Naive thymus-derived CD4-positive, alpha-beta T cell (primary cell): ENCODE measurements at regions of chr15 and their contacts with region 1.

Region 1: DNA sequence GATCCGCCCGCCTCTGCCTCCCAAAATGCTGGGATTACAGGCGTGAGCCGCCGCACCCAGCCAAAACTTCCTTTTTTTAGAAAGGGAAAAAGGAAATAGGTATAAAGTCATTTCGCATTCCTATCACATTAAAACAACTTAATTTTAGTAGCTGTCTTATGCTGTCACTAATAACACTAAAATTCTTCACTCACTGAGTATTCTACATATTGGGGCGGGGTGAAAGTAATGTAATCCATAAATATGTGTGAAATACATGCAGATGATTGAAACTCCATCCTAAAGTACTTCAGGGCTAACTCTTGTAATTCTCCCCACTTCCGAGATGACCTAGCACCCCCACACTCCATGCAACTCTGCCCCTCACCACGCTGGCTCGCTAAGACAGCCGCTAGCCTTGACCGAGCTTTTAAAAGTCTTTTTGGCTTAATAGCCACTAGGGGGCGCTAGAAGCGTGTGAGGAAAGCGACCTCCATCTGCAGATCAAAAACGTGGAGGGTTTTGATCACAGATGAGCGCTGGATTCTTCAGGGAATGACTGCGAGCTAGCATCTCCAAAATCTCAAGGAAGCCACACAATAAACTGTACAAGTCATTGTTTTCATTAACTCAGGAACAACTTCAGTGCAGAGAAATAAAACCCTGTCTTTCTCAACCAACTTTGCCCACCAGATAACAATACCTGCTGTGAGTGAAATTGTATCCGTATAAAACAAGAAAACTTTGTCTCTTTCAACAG is 129.3 kb upstream of the IGF1R start:
- DNase-seq: peak; percentile 16 to 70 (median 52)
- ATAC-seq: peak; percentile 85
- H3K4me3 ChIP-seq: no peak overlapping the region
- H3K4me3 Mint-ChIP-seq: no peak overlapping the region
- H3K27ac ChIP-seq: no peak overlapping the region
- H3K27ac Mint-ChIP-seq: peak overlapping the region in 1 of 9 donors; percentile 13
- H3K4me1 ChIP-seq: no peaks in the 10 kb centered on the region
- H3K4me1 Mint-ChIP-seq: peaks cover 0 to 8% (median 6%) of the 10 kb centered on the region in 7 donors
- H3K27me3 ChIP-seq: no peaks in the 10 kb centered on the region
- H3K27me3 Mint-ChIP-seq: peaks cover 0 to 7% (median 5%) of the 10 kb centered on the region in 5 donors

Region 2: GRCh38 chr15:98548154-98548971 is 29.4 kb after region 1 on chr15:
- CTCF ChIA-PET with region 1: no interaction called
- POLR2A ChIA-PET with region 1: no interaction called
- intact Hi-C with region 1: loop called in 1 of 2 experiments (anchors 1 kb)
- DNase-seq: peak in 8 of 9 donors; percentile 9 to 55 (median 20)
- ATAC-seq: peak; percentile 74
- H3K4me3 ChIP-seq: peak overlapping the region; percentile 59
- H3K4me3 Mint-ChIP-seq: peak overlapping the region; percentile 86 to 94 (median 90)
- H3K27ac ChIP-seq: no peak overlapping the region
- H3K27ac Mint-ChIP-seq: peak overlapping the region in 5 of 9 donors; percentile 23 to 87 (median 72)
- H3K4me1 ChIP-seq: no peaks in the 10 kb centered on the region
- H3K4me1 Mint-ChIP-seq: peaks cover 15 to 26% (median 22%) of the 10 kb centered on the region in 7 donors
- H3K27me3 ChIP-seq: no peaks in the 10 kb centered on the region
- H3K27me3 Mint-ChIP-seq: peaks cover 23 to 50% (median 39%) of the 10 kb centered on the region in 5 donors

Region 3: GRCh38 chr15:98779463-98780071 is 260.6 kb after region 1 on chr15:
- CTCF ChIA-PET with region 1: interaction called, 4 read pairs
- POLR2A ChIA-PET with region 1: no interaction called
- intact Hi-C with region 1: loop called (anchors 1 kb)
- DNase-seq: peak; percentile 44 to 75 (median 64)
- ATAC-seq: peak; percentile 94
- H3K4me3 ChIP-seq: no peak overlapping the region
- H3K4me3 Mint-ChIP-seq: peak overlapping the region; percentile 43 to 75 (median 64)
- H3K27ac ChIP-seq: no peak overlapping the region
- H3K27ac Mint-ChIP-seq: peak overlapping the region in 4 of 9 donors; percentile 56 to 78 (median 70)
- H3K4me1 ChIP-seq: peaks cover 0 to 21% of the 10 kb centered on the region in 2 donors
- H3K4me1 Mint-ChIP-seq: peaks cover 26 to 80% (median 62%) of the 10 kb centered on the region in 7 donors
- H3K27me3 ChIP-seq: no peaks in the 10 kb centered on the region
- H3K27me3 Mint-ChIP-seq: peaks cover 0 to 3% (median 0%) of the 10 kb centered on the region in 5 donors

Region 4: DNA sequence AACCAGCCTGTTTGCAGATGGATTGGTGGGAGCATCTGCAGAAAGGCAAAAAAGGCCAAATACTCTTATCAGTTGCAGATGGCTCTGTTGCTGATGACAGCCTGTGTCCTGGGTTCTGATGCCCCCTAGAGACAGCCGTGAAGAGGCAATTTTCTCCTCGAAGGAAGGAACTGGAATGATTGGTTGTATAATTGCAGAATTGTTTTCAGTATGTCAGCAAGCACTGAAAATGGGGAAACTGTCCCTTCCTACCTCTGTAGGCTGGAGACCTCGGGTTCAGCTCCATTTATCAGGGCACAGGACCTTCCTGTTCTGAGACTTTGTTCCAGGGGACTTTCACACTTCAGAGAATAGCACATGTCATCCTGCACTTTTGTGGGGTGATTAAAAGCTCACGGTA is 385.6 kb after region 1 on chr15:
- CTCF ChIA-PET with region 1: no interaction called
- POLR2A ChIA-PET with region 1: no interaction called
- intact Hi-C with region 1: loop called in 1 of 2 experiments (anchors 1 kb)
- DNase-seq: peak in 3 of 9 donors; percentile 7 to 12 (median 10)
- ATAC-seq: peak; percentile 49
- H3K4me3 ChIP-seq: no peak overlapping the region
- H3K4me3 Mint-ChIP-seq: no peak overlapping the region
- H3K27ac ChIP-seq: no peak overlapping the region
- H3K27ac Mint-ChIP-seq: no peak overlapping the region
- H3K4me1 ChIP-seq: no peaks in the 10 kb centered on the region
- H3K4me1 Mint-ChIP-seq: peaks cover 4 to 20% (median 10%) of the 10 kb centered on the region in 7 donors
- H3K27me3 ChIP-seq: peaks cover 0 to 3% of the 10 kb centered on the region in 2 donors
- H3K27me3 Mint-ChIP-seq: no peaks in the 10 kb centered on the region

Region 5: GRCh38 chr15:98952381-98952803 is 433.4 kb after region 1 on chr15:
- CTCF ChIA-PET with region 1: no interaction called
- POLR2A ChIA-PET with region 1: no interaction called
- intact Hi-C with region 1: no loop called
- DNase-seq: peak in 1 of 9 donors; percentile 13
- ATAC-seq: peak; percentile 51
- H3K4me3 ChIP-seq: no peak overlapping the region
- H3K4me3 Mint-ChIP-seq: peak overlapping the region in 7 of 10 donors; percentile 1 to 28 (median 25)
- H3K27ac ChIP-seq: no peak overlapping the region
- H3K27ac Mint-ChIP-seq: peak overlapping the region; percentile 26 to 86 (median 68)
- H3K4me1 ChIP-seq: peaks cover 0 to 3% of the 10 kb centered on the region in 2 donors
- H3K4me1 Mint-ChIP-seq: peaks cover 10 to 31% (median 15%) of the 10 kb centered on the region in 7 donors
- H3K27me3 ChIP-seq: no peaks in the 10 kb centered on the region
- H3K27me3 Mint-ChIP-seq: no peaks in the 10 kb centered on the region

Region 6: GRCh38 chr15:99076552-99077308 is 557.7 kb after region 1 on chr15:
- CTCF ChIA-PET with region 1: interaction called, 5 read pairs
- POLR2A ChIA-PET with region 1: no interaction called
- intact Hi-C with region 1: loop called (anchors 1 kb)
- DNase-seq: peak in 8 of 9 donors; percentile 20 to 65 (median 56)
- ATAC-seq: peak; percentile 89
- H3K4me3 ChIP-seq: peak overlapping the region; percentile 25
- H3K4me3 Mint-ChIP-seq: peak overlapping the region; percentile 73 to 92 (median 83)
- H3K27ac ChIP-seq: no peak overlapping the region
- H3K27ac Mint-ChIP-seq: peak overlapping the region in 4 of 9 donors; percentile 1 to 74 (median 57)
- H3K4me1 ChIP-seq: no peaks in the 10 kb centered on the region
- H3K4me1 Mint-ChIP-seq: peaks cover 0 to 8% (median 4%) of the 10 kb centered on the region in 7 donors
- H3K27me3 ChIP-seq: no peaks in the 10 kb centered on the region
- H3K27me3 Mint-ChIP-seq: peaks cover 7 to 26% (median 23%) of the 10 kb centered on the region in 5 donors